Activated B cell treated with CpG ODN at 0.5 μM for 24 hours (primary cell): ENCODE measurements at regions of chr1 and their contacts with region 1.

Region 1: DNA sequence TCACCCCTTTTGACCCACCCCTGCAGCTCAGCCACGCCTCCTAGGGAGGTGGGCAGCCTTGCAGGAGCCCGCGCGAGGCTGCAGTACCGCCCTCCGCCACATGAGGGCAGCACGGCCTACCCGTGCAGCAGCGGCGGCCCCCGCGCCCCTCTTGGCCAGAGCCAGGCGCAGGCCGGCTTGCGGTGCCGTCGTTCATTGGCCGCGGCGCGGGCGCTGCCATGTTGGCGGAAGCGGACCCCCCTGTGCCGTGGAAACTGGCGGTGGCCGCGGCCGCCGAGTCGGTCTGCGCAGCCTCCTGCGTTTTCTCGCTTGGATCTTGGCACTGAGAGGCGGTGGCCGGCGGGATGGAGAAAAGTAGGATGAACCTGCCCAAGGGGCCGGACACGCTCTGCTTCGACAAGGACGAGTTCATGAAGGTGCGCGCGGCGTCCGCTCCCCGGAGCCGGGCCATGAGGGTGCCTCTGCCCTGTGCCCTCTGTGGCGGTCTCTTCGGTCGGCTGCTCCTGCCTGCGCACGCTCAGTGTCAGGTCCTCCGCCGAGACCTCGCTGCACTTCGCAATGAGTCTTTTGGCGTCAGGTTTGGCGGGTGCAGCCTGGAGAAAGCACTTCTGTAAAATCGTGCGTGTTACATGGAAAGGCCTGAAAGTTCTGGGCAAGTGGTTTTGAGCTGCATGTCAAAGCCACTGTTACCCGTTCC is at the start of gene COG2:
- DNase-seq: peak; percentile 100
- ATAC-seq: peak; percentile 87
- H3K4me3 Mint-ChIP-seq: peak within 1 kb of the TSS; percentile 98
- H3K27ac Mint-ChIP-seq: peak within 1 kb of the TSS; percentile 96
- H3K4me1 Mint-ChIP-seq: peaks cover 50% of the 10 kb centered on the region
- H3K27me3 Mint-ChIP-seq: peaks cover 8% of the 10 kb centered on the region
- CTCF ChIP-seq: peak; percentile 96
- total RNA-seq, gene COG2: 38.5 and 39.0 TPM in 2 replicates

Region 2: DNA sequence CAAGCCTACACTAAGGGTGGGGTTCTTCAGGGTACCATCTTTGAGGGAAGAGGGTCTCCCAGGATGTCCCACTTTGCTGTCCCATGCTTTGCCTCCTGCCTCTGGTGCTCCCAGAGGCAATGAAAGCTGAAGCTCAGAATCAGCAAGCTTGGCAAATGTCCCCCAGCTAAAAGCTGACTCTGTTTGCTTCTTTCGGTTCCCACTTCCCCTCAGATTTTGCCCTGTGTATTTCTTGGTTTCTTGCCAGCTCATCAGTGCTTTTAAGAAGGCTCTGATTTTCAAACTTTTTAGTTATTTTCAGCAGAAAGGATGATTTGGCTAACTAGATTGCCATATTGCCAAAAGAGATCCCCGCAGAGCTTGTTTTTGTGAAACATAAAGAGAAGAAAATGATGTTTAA is 33.2 kb before region 1 on chr1:
- CTCF ChIA-PET with region 1: no interaction called
- POLR2A ChIA-PET with region 1: no interaction called
- intact Hi-C with region 1: no loop called
- DNase-seq: no peak
- ATAC-seq: no peak
- H3K4me3 Mint-ChIP-seq: no peak overlapping the region
- H3K27ac Mint-ChIP-seq: no peak overlapping the region
- H3K4me1 Mint-ChIP-seq: no peaks in the 10 kb centered on the region
- H3K27me3 Mint-ChIP-seq: no peaks in the 10 kb centered on the region
- CTCF ChIP-seq: no peak

Region 3: DNA sequence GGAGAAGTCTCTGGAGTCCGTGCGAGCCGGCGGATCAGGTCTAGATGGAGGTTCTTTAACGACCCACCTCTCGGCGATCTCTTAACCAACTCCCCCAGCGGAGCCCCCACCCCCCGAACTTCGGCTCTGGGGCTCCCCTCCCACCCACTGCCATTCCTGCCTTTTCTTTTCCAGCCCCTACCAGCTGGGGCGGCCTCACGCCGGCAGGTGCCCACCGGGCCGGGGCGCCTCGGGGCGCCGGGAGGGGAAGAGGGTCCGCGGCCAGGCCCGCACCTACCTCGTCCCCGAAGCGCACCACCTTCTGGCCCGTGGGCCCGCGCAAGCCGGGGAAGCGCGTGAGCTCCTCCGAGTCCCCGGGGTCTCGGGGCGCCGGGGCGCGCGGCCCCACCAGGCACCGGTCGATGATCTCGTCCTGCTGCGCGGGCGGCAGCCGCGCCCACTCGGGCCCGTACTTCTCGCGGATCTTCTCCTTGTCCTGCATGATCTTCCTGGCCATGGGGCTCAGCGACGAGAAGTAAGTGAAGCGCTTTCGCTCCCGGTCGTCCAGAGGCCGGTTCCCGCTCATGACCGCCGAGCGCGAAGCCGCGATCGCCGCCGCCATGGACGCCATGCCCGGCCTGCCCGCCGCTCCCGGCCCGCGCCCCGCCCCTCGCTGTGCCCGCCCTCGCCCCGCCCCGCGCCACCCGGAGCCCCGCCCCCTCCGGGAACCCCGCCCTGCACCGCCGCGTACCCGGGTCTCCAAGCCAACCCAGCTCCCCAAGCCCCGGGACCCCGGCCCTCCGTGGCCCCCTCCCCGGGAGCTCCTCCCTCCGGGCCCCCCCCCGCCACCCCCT is 225.7 kb after region 1 on chr1 and contains the start of gene C1orf198:
- CTCF ChIA-PET with region 1: no interaction called
- POLR2A ChIA-PET with region 1: no interaction called
- intact Hi-C with region 1: loop called (anchors 2 kb)
- DNase-seq: peak; percentile 81
- ATAC-seq: peak; percentile 95
- H3K4me3 Mint-ChIP-seq: peak within 1 kb of the TSS; percentile 89
- H3K27ac Mint-ChIP-seq: peak within 1 kb of the TSS; percentile 56
- H3K4me1 Mint-ChIP-seq: peaks cover 13% of the 10 kb centered on the region
- H3K27me3 Mint-ChIP-seq: peaks cover 21% of the 10 kb centered on the region
- CTCF ChIP-seq: no peak
- total RNA-seq, gene C1orf198: 3.5 and 3.9 TPM in 2 replicates

Region 4: GRCh38 chr1:231211005-231211857 is 568.8 kb after region 1 on chr1:
- CTCF ChIA-PET with region 1: interaction called, 3 read pairs
- POLR2A ChIA-PET with region 1: no interaction called
- intact Hi-C with region 1: loop called (anchors 1 kb)
- DNase-seq: peak; percentile 90
- ATAC-seq: peak; percentile 89
- H3K4me3 Mint-ChIP-seq: peak overlapping the region; percentile 93
- H3K27ac Mint-ChIP-seq: peak overlapping the region; percentile 85
- H3K4me1 Mint-ChIP-seq: peaks cover 37% of the 10 kb centered on the region
- H3K27me3 Mint-ChIP-seq: no peaks in the 10 kb centered on the region
- CTCF ChIP-seq: peak; percentile 46

Region 5: GRCh38 chr1:231337472-231338269 is 695.3 kb after region 1 on chr1 and contains the start of gene EXOC8:
- CTCF ChIA-PET with region 1: no interaction called
- POLR2A ChIA-PET with region 1: interaction called, 3 read pairs
- intact Hi-C with region 1: loop called (anchors 1 kb)
- DNase-seq: peak; percentile 99
- ATAC-seq: peak; percentile 78
- H3K4me3 Mint-ChIP-seq: peak within 1 kb of the TSS; percentile 99
- H3K27ac Mint-ChIP-seq: peak within 1 kb of the TSS; percentile 99
- H3K4me1 Mint-ChIP-seq: peaks cover 66% of the 10 kb centered on the region
- H3K27me3 Mint-ChIP-seq: peaks cover 1% of the 10 kb centered on the region
- CTCF ChIP-seq: no peak
- total RNA-seq, gene EXOC8: 21.7 and 24.9 TPM in 2 replicates

Region 6: DNA sequence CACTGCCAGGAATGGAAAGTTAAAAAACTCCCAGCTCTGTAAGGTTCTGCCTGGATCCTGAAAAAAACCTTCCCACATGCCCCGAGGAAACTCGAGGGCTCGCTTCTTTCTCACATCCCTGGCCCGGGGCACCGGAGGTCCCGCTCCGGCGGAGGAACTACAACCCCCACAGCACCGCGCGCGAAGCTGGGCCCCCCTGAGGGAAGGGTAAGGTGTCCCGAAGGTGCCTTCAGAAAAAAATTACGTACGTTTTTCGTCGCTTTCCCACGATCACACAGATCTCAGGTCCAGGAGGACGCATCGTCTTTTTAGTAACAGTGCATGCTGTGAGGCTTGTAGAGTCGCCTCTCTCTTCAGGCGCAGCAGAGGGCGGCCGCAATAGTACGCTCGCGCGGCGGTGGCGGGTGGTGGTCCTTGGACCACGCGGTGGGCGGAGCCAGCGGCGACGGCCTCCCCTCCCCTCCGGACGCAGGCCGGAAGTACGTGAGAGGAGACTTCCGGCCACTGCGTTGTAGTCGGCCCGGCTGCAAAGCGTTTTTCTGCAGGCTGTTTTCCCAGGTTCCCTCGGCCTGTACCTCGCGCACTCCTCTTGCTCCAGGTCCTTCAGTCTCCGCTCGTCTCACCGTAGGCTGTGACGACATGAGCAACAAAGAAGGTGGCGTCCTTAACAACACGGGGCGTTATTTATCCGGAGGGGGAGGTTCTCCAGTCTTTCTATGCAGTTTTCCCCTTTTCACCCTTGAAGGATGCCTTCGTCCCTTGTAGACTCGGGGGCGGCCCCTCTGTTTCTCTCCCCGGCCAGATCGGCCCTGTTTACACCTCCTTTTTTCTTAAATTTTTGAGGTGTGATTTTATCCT is 886.0 kb after region 1 on chr1 and contains the start of gene TSNAX:
- CTCF ChIA-PET with region 1: no interaction called
- POLR2A ChIA-PET with region 1: no interaction called
- intact Hi-C with region 1: loop called (anchors 1 kb)
- DNase-seq: peak; percentile 89
- ATAC-seq: peak; percentile 95
- H3K4me3 Mint-ChIP-seq: peak within 1 kb of the TSS; percentile 99
- H3K27ac Mint-ChIP-seq: peak within 1 kb of the TSS; percentile 100
- H3K4me1 Mint-ChIP-seq: peaks cover 33% of the 10 kb centered on the region
- H3K27me3 Mint-ChIP-seq: no peaks in the 10 kb centered on the region
- CTCF ChIP-seq: no peak
- total RNA-seq, gene TSNAX: 30.0 and 38.7 TPM in 2 replicates